Activated T-helper 2 cell treated with anti-CD3 and anti-CD28 coated beads, Interferon-gamma antibody, Interleukin-2, Interleukin-4, amounts not matched to agents 10 μg/mL and 5 μg/mL and 100 μg/mL, durations not matched to agents 14 hours and 24 hours and 36 hours (primary cell): ENCODE measurements at regions of chr17 and their contacts with region 1.

Region 1: GRCh38 chr17:64020056-64020766 is at the start of gene ICAM2:
- DNase-seq: peak; percentile 88
- H3K4me3 Mint-ChIP-seq: peak within 1 kb of the TSS; percentile 99
- H3K27ac Mint-ChIP-seq: peak within 1 kb of the TSS; percentile 99
- H3K4me1 Mint-ChIP-seq: peaks cover 60% of the 10 kb centered on the region
- H3K27me3 Mint-ChIP-seq: no peaks in the 10 kb centered on the region
- total RNA-seq, gene ICAM2: 83.2 and 85.6 TPM in 2 replicates

Region 2: GRCh38 chr17:63773381-63774140 is 246.7 kb before region 1 on chr17 and contains the start of gene CCDC47:
- intact Hi-C with region 1: no loop called
- DNase-seq: peak; percentile 99
- H3K4me3 Mint-ChIP-seq: peak within 1 kb of the TSS; percentile 92
- H3K27ac Mint-ChIP-seq: peak within 1 kb of the TSS; percentile 99
- H3K4me1 Mint-ChIP-seq: peaks cover 36% of the 10 kb centered on the region
- H3K27me3 Mint-ChIP-seq: no peaks in the 10 kb centered on the region
- total RNA-seq, gene CCDC47: 70.0 and 73.7 TPM in 2 replicates

Region 3: GRCh38 chr17:63998050-63998720 is 22.0 kb before region 1 on chr17 and contains the start of gene PRR29:
- intact Hi-C with region 1: loop called (anchors 2 kb)
- DNase-seq: peak; percentile 68
- H3K4me3 Mint-ChIP-seq: peak within 1 kb of the TSS; percentile 85
- H3K27ac Mint-ChIP-seq: no peak within 1 kb of the TSS
- H3K4me1 Mint-ChIP-seq: peaks cover 27% of the 10 kb centered on the region
- H3K27me3 Mint-ChIP-seq: peaks cover 23% of the 10 kb centered on the region
- total RNA-seq, gene PRR29: 0.14 and 0.18 TPM in 2 replicates

Region 4: GRCh38 chr17:64097196-64097936 is 77.2 kb after region 1 on chr17:
- intact Hi-C with region 1: no loop called
- DNase-seq: no peak
- H3K4me3 Mint-ChIP-seq: no peak overlapping the region
- H3K27ac Mint-ChIP-seq: peak overlapping the region; percentile 19
- H3K4me1 Mint-ChIP-seq: peaks cover 59% of the 10 kb centered on the region
- H3K27me3 Mint-ChIP-seq: no peaks in the 10 kb centered on the region